ENCODE measurements at regions of chr3 and their contacts with region 1.

Region 1: DNA sequence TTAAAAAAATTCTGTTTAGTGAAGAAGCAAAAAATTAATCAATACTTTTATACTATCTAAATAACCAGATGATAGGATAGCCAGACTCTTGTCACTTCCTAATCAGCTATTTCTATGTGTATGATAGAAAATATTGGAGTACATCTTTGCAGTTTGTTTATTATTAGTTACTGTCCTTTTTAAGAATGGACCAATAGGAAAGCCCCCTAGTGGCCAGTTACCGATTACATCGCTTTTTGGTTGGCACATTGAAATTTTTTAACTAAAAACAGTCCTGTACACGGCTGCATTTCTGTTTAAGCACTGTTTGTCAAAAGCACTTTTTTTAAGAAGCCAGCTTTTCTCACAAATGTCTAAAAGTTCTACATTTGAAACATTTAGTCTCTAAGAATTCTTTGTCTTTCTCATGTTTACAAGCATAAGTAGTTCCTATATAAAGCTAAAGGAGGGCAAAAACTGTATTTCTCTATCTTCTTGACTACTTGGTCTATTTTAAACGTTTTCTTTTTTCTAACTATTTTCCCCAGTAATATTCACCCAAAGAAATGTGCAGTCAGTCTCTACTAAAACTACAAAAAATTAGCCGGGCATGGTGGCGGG is 253.2 kb upstream of the LRTM1 start:
- DNase-seq: no peak
- H3K4me3 ChIP-seq: no peak overlapping the region
- H3K27ac ChIP-seq: no peak overlapping the region
- H3K4me1 ChIP-seq: no peaks in the 10 kb centered on the region
- H3K27me3 ChIP-seq: no peaks in the 10 kb centered on the region
- CTCF ChIP-seq: peak; percentile 25 to 52 (median 44)
- POLR2A ChIP-seq: no peak

Region 2: DNA sequence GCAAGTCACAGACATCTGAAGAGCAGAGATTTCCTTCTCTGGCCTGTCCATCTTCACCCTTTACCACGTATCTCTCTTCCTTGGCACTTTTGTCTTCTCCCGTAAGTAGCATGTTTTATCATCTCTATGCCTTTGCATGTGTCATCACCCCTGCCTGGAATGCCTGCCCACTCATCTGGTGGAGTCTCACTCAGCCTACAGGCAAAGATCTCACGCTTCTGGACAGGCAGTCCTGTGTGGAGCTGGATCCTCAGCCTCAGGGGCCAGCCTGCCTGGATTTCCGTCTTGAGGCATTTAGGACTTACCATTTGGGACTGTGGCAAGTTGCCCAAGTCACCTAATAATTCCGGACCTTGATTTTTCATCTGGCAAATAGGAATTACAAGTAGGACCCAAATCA is 1172.9 kb before region 1 on chr3:
- intact Hi-C with region 1: loop called (anchors 5 kb)
- DNase-seq: no peak
- H3K4me3 ChIP-seq: no peak overlapping the region
- H3K27ac ChIP-seq: no peak overlapping the region
- H3K4me1 ChIP-seq: no peaks in the 10 kb centered on the region
- H3K27me3 ChIP-seq: no peaks in the 10 kb centered on the region
- CTCF ChIP-seq: no peak
- POLR2A ChIP-seq: no peak